Cardiac septum (tissue), 1 donor: ENCODE measurements at regions of chr4 and their contacts with region 1.

Region 1: GRCh38 chr4:88659055-88659889 is 38.4 kb downstream of the NAP1L5 start:
- DNase-seq: no peak

Region 2: DNA sequence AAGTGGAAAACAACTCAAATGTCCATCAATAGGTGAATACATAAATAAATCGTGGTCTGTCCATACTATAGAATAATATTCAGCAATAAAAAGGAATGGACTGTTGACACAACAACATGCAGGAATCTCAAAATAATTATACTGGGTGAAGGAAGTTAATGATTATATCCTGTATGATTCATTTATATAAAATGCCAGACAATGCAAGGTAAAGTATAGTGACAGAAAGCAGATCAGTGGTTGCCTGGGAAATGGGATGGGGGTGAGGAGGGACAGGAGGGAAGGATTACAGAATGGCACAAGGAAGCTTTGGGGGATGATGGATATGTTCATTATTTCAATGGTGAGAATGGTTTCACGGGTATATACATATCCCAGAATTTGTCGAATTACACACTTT is 148.0 kb before region 1 on chr4:
- intact Hi-C with region 1: no loop called
- DNase-seq: no peak

Region 3: GRCh38 chr4:88533937-88534750 is 125.1 kb before region 1 on chr4:
- intact Hi-C with region 1: loop called (anchors 1 kb)
- DNase-seq: no peak